KBM-7 (cell line): ENCODE measurements at regions of chr7 and their contacts with region 1.

Region 1: DNA sequence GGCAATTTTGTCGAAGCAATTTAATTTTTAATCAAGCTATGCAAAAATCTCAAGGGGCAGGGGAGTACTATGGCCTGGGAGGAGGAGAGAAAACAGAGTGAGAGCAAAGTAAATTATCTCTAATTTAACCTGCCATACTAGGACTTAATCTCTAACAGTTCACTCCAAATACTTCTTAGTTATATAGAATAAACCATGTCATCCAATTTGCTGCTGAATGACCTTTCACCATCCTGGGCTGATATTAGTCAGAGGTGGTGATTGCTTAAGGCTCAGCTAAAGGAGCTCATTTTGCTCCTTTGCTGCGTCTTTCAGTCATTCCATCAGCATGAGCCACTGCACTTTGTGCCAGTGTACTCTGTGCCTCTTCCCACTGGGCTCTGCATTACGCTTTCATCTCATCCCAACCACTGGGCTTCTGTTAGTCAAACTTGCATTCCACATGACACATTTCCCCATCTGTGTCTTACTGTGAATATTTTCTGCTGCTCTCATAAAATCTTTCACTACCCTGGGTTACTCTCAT is 84.2 kb downstream of the CD36 start:
- DNase-seq: no peak

Region 2: GRCh38 chr7:80533287-80533686 is 189.4 kb before region 1 on chr7:
- in situ Hi-C with region 1: no loop called
- DNase-seq: no peak

Region 3: DNA sequence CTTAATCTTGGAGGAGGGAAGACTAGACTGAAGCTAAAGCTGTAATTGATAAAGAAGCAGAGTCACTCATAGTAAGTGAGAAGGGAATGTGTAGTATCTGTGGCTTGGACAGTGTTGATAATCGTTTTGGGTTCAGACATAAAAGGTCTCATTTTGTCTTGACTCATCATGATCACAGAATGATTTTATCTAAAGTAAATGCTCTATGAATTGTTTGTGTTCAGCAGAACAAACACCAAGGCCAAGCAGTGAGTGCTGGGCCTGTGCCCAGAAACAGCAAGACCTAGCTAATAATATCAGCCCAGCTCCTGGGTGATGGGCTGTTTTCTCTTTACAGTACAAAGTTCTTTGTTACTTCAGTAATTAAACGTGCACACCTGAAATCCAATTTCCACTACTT is 110.9 kb before region 1 on chr7:
- in situ Hi-C with region 1: no loop called
- DNase-seq: no peak

Region 4: GRCh38 chr7:81430150-81430549 is 707.5 kb after region 1 on chr7:
- in situ Hi-C with region 1: no loop called
- DNase-seq: no peak

Region 5: GRCh38 chr7:81469869-81470723 is 747.4 kb after region 1 on chr7:
- in situ Hi-C with region 1: loop called (anchors 25 kb)
- DNase-seq: peak; percentile 42